ENCODE measurements at regions of chr14 and their contacts with region 1.

Region 1: DNA sequence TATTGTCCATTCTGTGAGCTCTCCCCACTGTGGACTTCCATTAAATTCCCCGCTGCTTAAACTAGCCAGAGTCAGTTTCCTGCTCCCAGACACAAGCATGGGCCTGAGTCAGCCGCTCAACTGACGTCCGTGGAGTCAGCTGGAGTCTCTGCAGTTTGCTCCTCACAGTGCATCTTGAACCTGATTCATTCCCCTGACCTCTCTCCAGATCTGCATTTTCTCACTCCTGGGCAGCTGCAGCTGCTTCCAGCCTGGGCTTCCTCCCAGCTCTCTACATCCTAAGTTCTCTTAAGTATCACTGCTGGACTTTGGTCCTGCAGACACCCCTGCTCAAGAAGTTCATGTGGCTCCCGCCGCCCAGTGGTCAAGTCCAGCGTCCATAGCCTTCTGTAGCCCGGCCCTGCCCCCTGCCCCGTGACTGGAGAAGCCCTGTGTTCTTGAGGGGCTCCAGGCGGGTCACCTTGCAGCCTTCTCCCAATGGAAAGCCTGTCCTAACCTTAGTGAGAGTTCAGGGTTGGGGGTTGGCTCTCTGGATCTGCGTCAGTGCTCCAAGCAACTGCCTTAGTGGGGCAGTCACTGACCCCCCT is 20.0 kb downstream of the NFKBIA start:
- DNase-seq: no peak
- H3K4me3 ChIP-seq: peak overlapping the region in 2 of 4 donors; percentile 9 to 23
- H3K27ac ChIP-seq: peak overlapping the region; percentile 91 to 94 (median 92)
- H3K4me1 ChIP-seq: peaks cover 31 to 49% (median 46%) of the 10 kb centered on the region in 4 donors
- H3K27me3 ChIP-seq: no peaks in the 10 kb centered on the region
- CTCF ChIP-seq: peak in 2 of 3 experiments; percentile 35 to 37
- EP300 ChIP-seq: no peak
- POLR2A ChIP-seq: no peak

Region 2: GRCh38 chr14:35215110-35215876 is 169.3 kb before region 1 on chr14:
- intact Hi-C with region 1: no loop called
- DNase-seq: no peak
- H3K4me3 ChIP-seq: no peak overlapping the region
- H3K27ac ChIP-seq: peak overlapping the region; percentile 45 to 50 (median 48)
- H3K4me1 ChIP-seq: peaks cover 0 to 26% (median 21%) of the 10 kb centered on the region in 4 donors
- H3K27me3 ChIP-seq: no peaks in the 10 kb centered on the region
- CTCF ChIP-seq: peak; percentile 60 to 75 (median 69)
- EP300 ChIP-seq: no peak
- POLR2A ChIP-seq: no peak

Region 3: DNA sequence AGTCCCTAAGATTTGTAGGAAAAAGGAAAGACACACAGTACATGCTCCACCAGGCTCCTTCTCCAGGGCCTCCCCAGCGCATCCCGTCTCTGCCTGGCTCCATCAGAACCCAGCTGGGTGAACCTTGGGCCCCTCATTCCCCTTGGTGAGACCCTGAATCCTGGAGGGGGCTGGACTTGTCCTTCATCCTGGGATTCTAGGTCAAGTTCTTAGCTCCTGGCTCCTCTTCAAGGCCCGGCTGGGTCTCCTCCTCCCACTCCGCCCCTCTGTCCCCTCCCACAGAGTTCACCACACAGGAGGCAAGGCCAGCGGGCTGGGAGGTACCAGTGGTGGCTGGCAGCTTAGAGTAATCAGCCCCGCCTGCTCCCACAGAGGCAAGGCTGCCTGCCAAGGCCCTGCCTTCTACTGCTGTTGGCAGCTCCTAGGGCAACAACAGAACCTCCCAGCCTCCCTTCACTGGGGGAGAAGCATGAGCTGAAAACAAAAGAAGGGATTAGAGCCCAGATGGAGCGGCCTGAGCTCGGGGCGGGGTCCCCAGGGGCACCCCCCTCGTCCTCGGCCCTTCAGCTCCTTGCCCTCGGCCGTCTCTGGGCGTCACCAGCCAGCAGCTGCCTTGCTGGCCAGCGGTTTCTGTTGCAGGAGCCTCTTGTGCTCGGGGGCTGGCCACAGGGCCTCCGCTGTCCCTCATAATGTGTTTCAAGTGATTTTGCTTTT is 42.9 kb before region 1 on chr14:
- intact Hi-C with region 1: loop called (anchors 5 kb)
- DNase-seq: peak; percentile 98
- H3K4me3 ChIP-seq: peak overlapping the region; percentile 44 to 50 (median 46)
- H3K27ac ChIP-seq: peak overlapping the region; percentile 92 to 96 (median 94)
- H3K4me1 ChIP-seq: peaks cover 59 to 80% (median 75%) of the 10 kb centered on the region in 4 donors
- H3K27me3 ChIP-seq: no peaks in the 10 kb centered on the region
- CTCF ChIP-seq: no peak
- EP300 ChIP-seq: peak; percentile 25
- POLR2A ChIP-seq: peak; percentile 31

Measured in esophagus muscularis mucosa (tissue), 4 donors.